ENCODE measurements at regions of chr17 and their contacts with region 1.

Region 1: GRCh38 chr17:43940630-43941029 is 1.6 kb downstream of the PPY start:
- DNase-seq: no peak
- H3K4me3 ChIP-seq: no peak overlapping the region
- H3K27ac ChIP-seq: no peak overlapping the region
- H3K4me1 ChIP-seq: peaks cover 0 to 9% (median 9%) of the 10 kb centered on the region in 4 donors
- H3K27me3 ChIP-seq: peaks cover 0 to 39% (median 14%) of the 10 kb centered on the region in 3 donors
- CTCF ChIP-seq: peak in 1 of 4 experiments; percentile 9
- EP300 ChIP-seq: no peak
- POLR2A ChIP-seq: no peak

Region 2: DNA sequence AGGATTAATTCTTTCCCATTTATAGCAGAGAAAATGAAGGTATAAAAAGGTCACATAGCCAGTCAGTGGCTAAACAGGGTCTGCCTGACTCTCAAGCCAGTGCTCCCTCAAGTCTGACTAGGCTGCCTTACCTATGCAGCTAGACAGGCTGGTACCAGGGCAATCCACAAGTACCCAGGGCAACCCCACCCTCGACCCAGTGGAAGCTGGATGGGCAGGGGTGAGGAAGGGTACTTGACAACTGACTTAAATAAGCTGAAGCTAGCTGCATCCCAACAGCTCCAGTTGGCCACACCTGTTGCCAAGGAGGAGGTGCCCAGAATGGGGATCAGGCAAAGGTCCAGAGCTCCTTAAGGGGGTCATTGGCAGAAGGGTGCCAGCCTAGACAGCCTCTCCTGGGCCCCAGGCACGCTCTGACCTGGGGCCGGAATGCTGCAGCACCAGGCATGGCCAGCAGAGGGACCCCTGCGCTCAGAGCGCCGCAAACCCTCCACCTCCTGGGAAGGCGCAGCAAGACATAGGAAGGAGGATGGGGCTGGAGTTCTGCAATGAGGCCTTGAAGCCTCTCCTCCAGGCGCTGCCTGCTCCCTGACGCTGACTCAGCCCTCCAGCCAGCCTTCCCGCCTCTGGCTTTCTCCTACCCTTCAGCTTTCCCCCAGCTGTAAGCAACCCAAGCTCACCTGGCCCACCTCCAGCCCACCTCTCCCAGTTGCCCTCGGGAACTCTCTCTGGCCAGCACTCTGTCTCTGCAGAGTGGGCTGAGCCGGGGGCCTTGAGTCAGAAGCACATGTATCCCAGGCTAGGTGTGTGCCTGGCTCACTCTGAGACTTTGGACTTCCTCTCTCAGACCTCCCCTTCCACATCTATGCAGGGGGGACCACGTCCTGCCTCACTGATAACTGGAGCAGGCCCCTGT is 62.1 kb before region 1 on chr17:
- intact Hi-C with region 1: loop called (anchors 2 kb)
- DNase-seq: peak; percentile 87
- H3K4me3 ChIP-seq: no peak overlapping the region
- H3K27ac ChIP-seq: peak overlapping the region in 2 of 4 donors; percentile 25 to 35
- H3K4me1 ChIP-seq: peaks cover 0 to 6% (median 4%) of the 10 kb centered on the region in 4 donors
- H3K27me3 ChIP-seq: no peaks in the 10 kb centered on the region
- CTCF ChIP-seq: peak; percentile 82 to 97 (median 89)
- EP300 ChIP-seq: no peak
- POLR2A ChIP-seq: no peak

Region 3: GRCh38 chr17:43994272-43995149 is 53.9 kb after region 1 on chr17:
- intact Hi-C with region 1: loop called (anchors 1 kb)
- DNase-seq: peak; percentile 83
- H3K4me3 ChIP-seq: peak overlapping the region in 3 of 4 donors; percentile 16 to 35 (median 32)
- H3K27ac ChIP-seq: no peak overlapping the region
- H3K4me1 ChIP-seq: peaks cover 0 to 9% (median 8%) of the 10 kb centered on the region in 4 donors
- H3K27me3 ChIP-seq: peaks cover 0 to 22% (median 3%) of the 10 kb centered on the region in 3 donors
- CTCF ChIP-seq: peak; percentile 72 to 85 (median 76)
- EP300 ChIP-seq: no peak
- POLR2A ChIP-seq: no peak

Region 4: GRCh38 chr17:44039829-44040635 is 99.4 kb after region 1 on chr17:
- intact Hi-C with region 1: loop called (anchors 2 kb)
- DNase-seq: no peak
- H3K4me3 ChIP-seq: no peak overlapping the region
- H3K27ac ChIP-seq: peak overlapping the region; percentile 62 to 72 (median 67)
- H3K4me1 ChIP-seq: peaks cover 0 to 57% (median 41%) of the 10 kb centered on the region in 4 donors
- H3K27me3 ChIP-seq: no peaks in the 10 kb centered on the region
- CTCF ChIP-seq: no peak
- EP300 ChIP-seq: no peak
- POLR2A ChIP-seq: no peak

Region 5: GRCh38 chr17:44159519-44160210 is 219.0 kb after region 1 on chr17:
- intact Hi-C with region 1: loop called (anchors 10 kb)
- DNase-seq: no peak
- H3K4me3 ChIP-seq: no peak overlapping the region
- H3K27ac ChIP-seq: no peak overlapping the region
- H3K4me1 ChIP-seq: no peaks in the 10 kb centered on the region
- H3K27me3 ChIP-seq: no peaks in the 10 kb centered on the region
- CTCF ChIP-seq: no peak
- EP300 ChIP-seq: no peak
- POLR2A ChIP-seq: no peak